Activated CD4-positive, alpha-beta T cell treated with anti-CD3 and anti-CD28 coated beads for 36 hours (primary cell): ENCODE measurements at regions of chr1 and their contacts with region 1.

Region 1: DNA sequence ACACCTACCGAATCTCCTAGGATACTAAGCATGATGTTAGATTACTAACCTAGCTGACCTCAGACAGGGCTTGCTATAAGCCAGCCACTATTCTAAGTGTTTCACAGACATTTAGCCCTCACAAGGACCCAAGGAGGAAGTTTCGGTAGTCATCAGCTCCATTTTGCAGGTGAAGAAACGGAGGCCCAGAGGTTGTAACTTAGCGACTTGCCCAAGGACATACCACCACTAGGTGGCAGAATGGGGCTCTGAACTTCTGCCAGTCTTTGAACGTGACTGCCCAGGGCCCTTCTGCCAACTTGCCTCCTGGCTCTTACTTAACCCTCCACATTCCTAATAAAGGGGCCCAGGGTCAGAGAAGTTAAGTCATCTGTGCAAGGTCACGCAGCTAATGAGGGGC is 283.5 kb downstream of the C1orf94 start:
- DNase-seq: peak; percentile 76
- ATAC-seq: no peak
- H3K4me3 Mint-ChIP-seq: no peak overlapping the region
- H3K27ac Mint-ChIP-seq: no peak overlapping the region
- H3K4me1 Mint-ChIP-seq: no peaks in the 10 kb centered on the region
- H3K27me3 Mint-ChIP-seq: peaks cover 9% of the 10 kb centered on the region

Region 2: GRCh38 chr1:34597877-34598514 is 137.8 kb after region 1 on chr1:
- CTCF ChIA-PET with region 1: interaction called, 12 read pairs
- POLR2A ChIA-PET with region 1: no interaction called
- intact Hi-C with region 1: loop called (anchors 1 kb)
- DNase-seq: peak; percentile 84
- ATAC-seq: peak; percentile 60
- H3K4me3 Mint-ChIP-seq: no peak overlapping the region
- H3K27ac Mint-ChIP-seq: no peak overlapping the region
- H3K4me1 Mint-ChIP-seq: no peaks in the 10 kb centered on the region
- H3K27me3 Mint-ChIP-seq: peaks cover 6% of the 10 kb centered on the region

Region 3: DNA sequence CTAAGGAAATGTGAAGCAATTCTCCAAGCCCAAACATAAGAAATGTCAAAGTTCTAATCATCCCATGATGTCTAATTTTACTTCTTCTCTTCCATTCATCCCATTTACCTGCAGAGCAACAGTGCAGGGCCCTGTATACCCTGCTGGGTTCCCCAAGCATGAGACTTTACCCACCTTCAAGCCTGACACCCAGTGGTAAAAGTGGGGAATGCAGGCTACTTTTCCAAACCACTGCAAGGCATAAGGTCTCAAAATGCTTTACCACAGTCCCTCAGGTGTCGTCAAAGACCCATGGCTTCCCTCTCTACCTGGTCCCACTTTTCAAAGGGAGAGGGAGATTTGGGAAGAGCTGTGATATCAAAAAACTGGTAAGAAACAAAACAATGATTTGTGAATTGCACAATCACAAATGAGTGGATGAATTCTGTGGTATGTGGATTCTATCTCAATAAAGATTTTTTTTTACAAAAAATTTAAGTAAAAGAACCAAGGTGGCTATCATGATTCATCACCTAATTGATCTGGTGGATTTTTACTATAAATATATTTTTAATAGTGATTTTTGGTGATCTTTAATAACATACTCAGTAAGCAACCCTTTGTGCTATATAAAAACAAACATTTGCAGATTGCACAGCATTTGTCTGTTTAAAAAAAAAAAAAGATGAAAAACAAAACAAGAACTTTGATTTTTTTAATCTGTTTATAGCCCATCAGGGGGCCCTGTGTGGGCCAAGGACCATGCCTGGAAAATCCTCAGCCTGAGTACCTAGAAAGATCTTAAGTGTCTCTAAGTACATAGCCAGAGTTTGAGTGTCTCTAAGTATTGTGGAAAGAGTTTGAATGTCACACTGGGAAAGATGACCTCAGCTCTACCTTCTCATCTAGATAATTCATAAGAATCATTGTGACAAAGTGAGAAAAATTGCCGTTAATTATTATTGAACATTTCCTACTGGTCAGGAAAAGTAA is 221.6 kb after region 1 on chr1:
- CTCF ChIA-PET with region 1: interaction called, 5 read pairs
- POLR2A ChIA-PET with region 1: no interaction called
- intact Hi-C with region 1: loop called (anchors 1 to 5 kb)
- DNase-seq: peak; percentile 69
- ATAC-seq: peak; percentile 69
- H3K4me3 Mint-ChIP-seq: no peak overlapping the region
- H3K27ac Mint-ChIP-seq: no peak overlapping the region
- H3K4me1 Mint-ChIP-seq: peaks cover 6% of the 10 kb centered on the region
- H3K27me3 Mint-ChIP-seq: peaks cover 13% of the 10 kb centered on the region

Region 4: DNA sequence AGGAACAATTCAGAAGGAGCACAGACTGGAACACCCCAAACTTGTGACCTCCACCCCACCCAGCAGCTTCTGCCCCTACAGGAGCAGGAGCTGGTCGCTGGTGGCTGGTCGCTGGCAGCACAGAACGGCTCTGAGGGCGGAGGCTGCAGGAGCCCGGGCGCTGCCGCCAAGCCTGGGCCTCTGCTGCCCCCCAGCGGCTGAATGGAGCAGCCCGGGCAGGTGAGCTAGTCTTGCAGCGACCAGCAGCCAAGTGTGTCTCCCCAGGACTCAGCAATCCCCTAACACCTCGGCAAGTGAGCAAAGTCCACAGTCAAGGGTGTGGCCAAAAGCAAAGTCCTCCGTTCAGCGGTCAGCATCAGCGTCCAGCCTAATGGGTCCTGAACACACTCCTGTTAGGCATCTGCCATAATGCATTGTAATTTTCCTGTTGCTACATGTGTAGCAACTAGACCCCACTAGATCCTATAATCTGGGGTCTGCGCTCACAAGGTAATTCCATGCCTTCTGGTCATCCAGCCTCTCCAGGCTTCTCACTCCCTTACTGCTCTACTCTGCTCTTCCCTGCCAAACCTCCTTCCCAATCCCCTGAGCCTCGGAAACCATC is 282.6 kb after region 1 on chr1:
- CTCF ChIA-PET with region 1: interaction called, 22 read pairs
- POLR2A ChIA-PET with region 1: no interaction called
- intact Hi-C with region 1: loop called (anchors 1 to 2 kb)
- DNase-seq: peak; percentile 91
- ATAC-seq: peak; percentile 98
- H3K4me3 Mint-ChIP-seq: no peak overlapping the region
- H3K27ac Mint-ChIP-seq: no peak overlapping the region
- H3K4me1 Mint-ChIP-seq: no peaks in the 10 kb centered on the region
- H3K27me3 Mint-ChIP-seq: no peaks in the 10 kb centered on the region